ENCODE measurements at regions of chr9 and their contacts with region 1.

Region 1: GRCh38 chr9:249025-249424 is 34.4 kb downstream of the DOCK8 start:
- DNase-seq: peak in 20 of 35 experiments; percentile 2 to 57 (median 12)
- ATAC-seq: peak in 2 of 4 experiments; percentile 24 to 78
- H3K4me3 ChIP-seq: no peak overlapping the region
- H3K4me3 Mint-ChIP-seq: no peak overlapping the region
- H3K27ac ChIP-seq: no peak overlapping the region
- H3K27ac Mint-ChIP-seq: peak overlapping the region in 1 of 2 donors; percentile 74
- H3K4me1 ChIP-seq: peaks cover 0 to 8% of the 10 kb centered on the region in 2 experiments
- H3K4me1 Mint-ChIP-seq: peaks cover 3 to 22% (median 15%) of the 10 kb centered on the region in 3 donors
- H3K27me3 ChIP-seq: no peaks in the 10 kb centered on the region
- H3K27me3 Mint-ChIP-seq: peaks cover 0 to 3% of the 10 kb centered on the region in 2 donors

Region 2: GRCh38 chr9:292914-293313 is 43.9 kb after region 1 on chr9:
- CTCF ChIA-PET with region 1: interaction called in 1 of 2 experiments, 12 read pairs
- POLR2A ChIA-PET with region 1: no interaction called
- DNase-seq: no peak
- ATAC-seq: no peak
- H3K4me3 ChIP-seq: no peak overlapping the region
- H3K4me3 Mint-ChIP-seq: no peak overlapping the region
- H3K27ac ChIP-seq: no peak overlapping the region
- H3K27ac Mint-ChIP-seq: peak overlapping the region; percentile 12 to 70
- H3K4me1 ChIP-seq: peaks cover 2 to 11% of the 10 kb centered on the region in 2 experiments
- H3K4me1 Mint-ChIP-seq: peaks cover 62 to 77% (median 66%) of the 10 kb centered on the region in 3 donors
- H3K27me3 ChIP-seq: no peaks in the 10 kb centered on the region
- H3K27me3 Mint-ChIP-seq: no peaks in the 10 kb centered on the region

Region 3: DNA sequence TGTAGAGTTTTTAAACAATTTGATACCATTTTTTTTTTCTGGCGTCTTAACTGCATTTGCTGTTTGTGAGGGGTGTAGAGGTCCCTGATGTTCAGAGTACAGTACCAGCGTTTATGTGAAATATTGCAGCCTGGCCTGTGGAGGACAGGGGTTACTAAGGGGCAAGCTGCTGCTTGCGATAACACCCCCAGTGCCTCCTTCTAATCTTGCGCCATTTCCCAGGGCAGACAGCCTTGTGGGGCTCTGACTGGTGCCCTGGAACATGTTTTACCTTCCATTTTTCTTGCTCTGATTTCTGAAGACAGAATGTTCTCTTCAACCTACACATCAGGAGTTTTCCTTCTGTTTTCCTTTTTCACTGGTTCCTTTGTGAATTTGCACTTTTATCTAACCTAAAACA is 108.5 kb after region 1 on chr9:
- CTCF ChIA-PET with region 1: no interaction called
- POLR2A ChIA-PET with region 1: no interaction called
- DNase-seq: no peak
- ATAC-seq: no peak
- H3K4me3 ChIP-seq: no peak overlapping the region
- H3K4me3 Mint-ChIP-seq: no peak overlapping the region
- H3K27ac ChIP-seq: no peak overlapping the region
- H3K27ac Mint-ChIP-seq: peak overlapping the region in 1 of 2 donors; percentile 4
- H3K4me1 ChIP-seq: no peaks in the 10 kb centered on the region
- H3K4me1 Mint-ChIP-seq: peaks cover 18 to 43% (median 30%) of the 10 kb centered on the region in 3 donors
- H3K27me3 ChIP-seq: no peaks in the 10 kb centered on the region
- H3K27me3 Mint-ChIP-seq: no peaks in the 10 kb centered on the region